ENCODE measurements at regions of chr14 and their contacts with region 1.

Region 1: GRCh38 chr14:71753126-71753830 is 179.0 kb upstream of the RGS6 start:
- DNase-seq: peak; percentile 93
- H3K4me3 ChIP-seq: peak overlapping the region in 1 of 8 donors; percentile 43
- H3K27ac ChIP-seq: peak overlapping the region in 5 of 8 donors; percentile 36 to 68 (median 49)
- H3K4me1 ChIP-seq: peaks cover 5 to 20% (median 12%) of the 10 kb centered on the region in 6 donors
- H3K27me3 ChIP-seq: no peaks in the 10 kb centered on the region
- CTCF ChIP-seq: peak; percentile 73 to 93 (median 87)
- POLR2A ChIP-seq: no peak

Region 2: DNA sequence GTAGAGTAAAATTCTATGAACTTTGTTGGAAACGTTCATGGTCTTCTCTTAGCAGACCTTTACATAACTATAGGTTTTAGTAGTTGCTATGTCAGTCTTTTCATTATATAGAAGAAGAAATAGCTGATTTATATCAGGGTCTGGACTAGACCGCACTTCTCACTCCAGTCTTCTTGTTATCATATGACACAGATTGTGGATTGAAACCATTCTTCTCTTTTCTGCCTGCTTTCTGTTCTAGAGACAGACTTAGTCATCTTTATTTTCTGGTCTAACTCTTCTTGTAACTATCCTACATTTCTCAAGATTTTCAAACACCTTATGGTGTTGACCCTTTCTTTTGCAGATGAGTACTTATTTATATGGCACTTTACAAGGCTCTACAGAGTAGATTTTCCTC is 790.3 kb before region 1 on chr14:
- intact Hi-C with region 1: no loop called
- DNase-seq: no peak
- H3K4me3 ChIP-seq: no peak overlapping the region
- H3K27ac ChIP-seq: no peak overlapping the region
- H3K4me1 ChIP-seq: peaks cover 0 to 47% (median 14%) of the 10 kb centered on the region in 6 donors
- H3K27me3 ChIP-seq: no peaks in the 10 kb centered on the region
- CTCF ChIP-seq: no peak
- POLR2A ChIP-seq: no peak

Region 3: GRCh38 chr14:71138448-71139293 is 614.6 kb before region 1 on chr14:
- intact Hi-C with region 1: loop called (anchors 2 kb)
- DNase-seq: peak; percentile 87
- H3K4me3 ChIP-seq: peak overlapping the region in 3 of 8 donors; percentile 12 to 57 (median 16)
- H3K27ac ChIP-seq: peak overlapping the region in 2 of 8 donors; percentile 9 to 31
- H3K4me1 ChIP-seq: peaks cover 0 to 51% (median 36%) of the 10 kb centered on the region in 6 donors
- H3K27me3 ChIP-seq: no peaks in the 10 kb centered on the region
- CTCF ChIP-seq: peak; percentile 86 to 97 (median 93)
- POLR2A ChIP-seq: no peak

Region 4: DNA sequence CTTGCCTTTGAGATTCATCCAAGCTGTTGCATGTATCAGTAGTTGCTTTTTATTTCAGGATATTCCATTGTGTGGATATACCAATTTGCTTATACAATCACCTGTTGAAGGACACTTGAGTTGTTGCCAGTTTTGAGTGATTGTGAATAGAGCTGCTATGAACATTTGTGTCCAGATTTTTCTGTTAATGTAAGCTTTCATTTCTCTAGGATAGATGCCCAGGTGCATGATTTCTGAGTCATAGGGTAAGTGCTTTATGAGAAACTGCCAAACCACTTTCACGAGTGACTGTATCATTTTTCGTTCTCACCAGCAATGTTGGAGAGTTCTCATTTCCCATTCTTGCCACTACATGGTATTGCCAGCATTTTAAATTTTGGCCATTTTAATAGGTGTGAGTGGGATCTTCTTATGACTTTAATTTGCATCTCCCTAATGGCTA is 255.6 kb before region 1 on chr14:
- intact Hi-C with region 1: no loop called
- DNase-seq: no peak
- H3K4me3 ChIP-seq: no peak overlapping the region
- H3K27ac ChIP-seq: no peak overlapping the region
- H3K4me1 ChIP-seq: peaks cover 0 to 25% (median 10%) of the 10 kb centered on the region in 6 donors
- H3K27me3 ChIP-seq: no peaks in the 10 kb centered on the region
- CTCF ChIP-seq: no peak
- POLR2A ChIP-seq: no peak

Measured in spleen (tissue), 13 donors.